Activated CD4-positive, alpha-beta T cell treated with anti-CD3 and anti-CD28 coated beads, Interleukin-2, amount 10 ng/mL, durations not matched to agents 7 days and 5 days (primary cell): ENCODE measurements at regions of chr3 and their contacts with region 1.

Region 1: GRCh38 chr3:51799879-51800749 is 21.1 kb upstream of the IQCF6 start:
- DNase-seq: peak; percentile 60
- H3K4me3 Mint-ChIP-seq: no peak overlapping the region
- H3K27ac Mint-ChIP-seq: no peak overlapping the region
- H3K4me1 Mint-ChIP-seq: peaks cover 40% of the 10 kb centered on the region
- H3K27me3 Mint-ChIP-seq: peaks cover 19% of the 10 kb centered on the region

Region 2: GRCh38 chr3:51718547-51719409 is 81.3 kb before region 1 on chr3:
- CTCF ChIA-PET with region 1: interaction called, 11 read pairs
- POLR2A ChIA-PET with region 1: no interaction called
- DNase-seq: peak; percentile 78
- H3K4me3 Mint-ChIP-seq: no peak overlapping the region
- H3K27ac Mint-ChIP-seq: no peak overlapping the region
- H3K4me1 Mint-ChIP-seq: peaks cover 36% of the 10 kb centered on the region
- H3K27me3 Mint-ChIP-seq: no peaks in the 10 kb centered on the region